GM23248 (cell line): ENCODE measurements at regions of chr11 and their contacts with region 1.

Region 1: GRCh38 chr11:70191495-70192140 is 11.5 kb upstream of the FADD start:
- DNase-seq: peak; percentile 74
- H3K4me3 ChIP-seq: no peak overlapping the region
- H3K27ac ChIP-seq: no peak overlapping the region
- H3K4me1 ChIP-seq: no peaks in the 10 kb centered on the region
- H3K27me3 ChIP-seq: peaks cover 20% of the 10 kb centered on the region

Region 2: DNA sequence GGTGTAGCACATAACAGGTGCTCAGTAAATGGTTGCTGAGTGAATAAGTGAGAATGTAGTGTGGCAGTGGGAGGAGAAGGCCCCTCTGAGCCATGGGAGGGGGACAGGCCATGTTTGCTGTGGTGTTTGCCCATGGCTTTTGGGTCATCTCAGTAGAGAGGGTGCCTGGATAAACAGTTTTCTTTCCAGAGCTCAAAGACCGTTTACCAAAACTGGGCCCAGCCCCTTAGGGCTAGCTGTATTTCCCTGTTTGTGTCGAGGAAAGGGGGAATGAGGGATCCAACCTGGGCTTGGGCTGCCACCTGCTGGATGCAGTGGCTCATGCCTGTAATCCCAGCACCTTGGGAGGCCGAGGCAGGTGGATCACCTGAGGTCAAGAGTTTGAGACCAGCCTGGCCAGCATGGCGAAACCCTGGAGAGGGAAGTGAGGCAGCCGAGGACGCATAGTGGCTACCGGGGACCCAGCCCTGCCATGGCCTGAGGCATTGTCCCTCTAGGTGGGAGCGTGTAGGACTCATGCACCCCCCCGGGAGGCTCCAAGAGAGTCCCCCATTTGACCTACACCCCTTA is 507.8 kb before region 1 on chr11:
- in situ Hi-C with region 1: loop called (anchors 10 kb)
- DNase-seq: peak; percentile 28
- H3K4me3 ChIP-seq: no peak overlapping the region
- H3K27ac ChIP-seq: no peak overlapping the region
- H3K4me1 ChIP-seq: no peaks in the 10 kb centered on the region
- H3K27me3 ChIP-seq: 0 out of 2 replicates have a peak, but pooled peaks cover 5% of the 10 kb centered on the region

Region 3: GRCh38 chr11:69718147-69718546 is 473.5 kb before region 1 on chr11:
- in situ Hi-C with region 1: loop called (anchors 10 kb)
- DNase-seq: peak; percentile 48
- H3K4me3 ChIP-seq: no peak overlapping the region
- H3K27ac ChIP-seq: no peak overlapping the region
- H3K4me1 ChIP-seq: no peaks in the 10 kb centered on the region
- H3K27me3 ChIP-seq: peaks cover 44% of the 10 kb centered on the region

Region 4: GRCh38 chr11:69925366-69926196 is 266.0 kb before region 1 on chr11:
- in situ Hi-C with region 1: loop called (anchors 5 kb)
- DNase-seq: no peak
- H3K4me3 ChIP-seq: no peak overlapping the region
- H3K27ac ChIP-seq: no peak overlapping the region
- H3K4me1 ChIP-seq: no peaks in the 10 kb centered on the region
- H3K27me3 ChIP-seq: peaks cover 61% of the 10 kb centered on the region